Lower leg skin (tissue), 4 donors: ENCODE measurements at regions of chr12 and their contacts with region 1.

Region 1: DNA sequence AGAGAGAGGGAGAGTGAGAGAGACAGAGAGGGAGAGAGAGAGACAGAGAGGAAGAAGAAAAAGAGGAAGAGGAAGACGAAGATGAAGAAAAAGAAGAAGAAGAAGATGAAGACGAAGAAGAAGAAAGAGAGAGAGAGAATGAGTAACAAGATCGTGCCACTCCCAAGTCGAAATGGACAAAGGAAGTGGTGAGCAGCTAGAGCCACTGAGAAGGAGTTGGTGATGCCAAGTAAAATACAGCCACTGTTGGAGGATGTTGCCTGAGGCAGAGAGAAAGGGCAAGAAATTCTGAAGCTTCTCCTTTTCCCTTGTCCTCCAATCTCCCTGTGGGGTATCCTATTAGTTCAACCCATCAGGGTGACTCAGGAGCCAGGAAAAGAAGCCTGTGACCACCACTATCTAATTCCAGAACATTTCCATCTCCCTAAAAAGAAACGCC is 12.5 kb upstream of the ANAPC5 start:
- DNase-seq: no peak
- H3K4me3 ChIP-seq: no peak overlapping the region
- CTCF ChIP-seq: no peak
- POLR2A ChIP-seq: no peak

Region 2: DNA sequence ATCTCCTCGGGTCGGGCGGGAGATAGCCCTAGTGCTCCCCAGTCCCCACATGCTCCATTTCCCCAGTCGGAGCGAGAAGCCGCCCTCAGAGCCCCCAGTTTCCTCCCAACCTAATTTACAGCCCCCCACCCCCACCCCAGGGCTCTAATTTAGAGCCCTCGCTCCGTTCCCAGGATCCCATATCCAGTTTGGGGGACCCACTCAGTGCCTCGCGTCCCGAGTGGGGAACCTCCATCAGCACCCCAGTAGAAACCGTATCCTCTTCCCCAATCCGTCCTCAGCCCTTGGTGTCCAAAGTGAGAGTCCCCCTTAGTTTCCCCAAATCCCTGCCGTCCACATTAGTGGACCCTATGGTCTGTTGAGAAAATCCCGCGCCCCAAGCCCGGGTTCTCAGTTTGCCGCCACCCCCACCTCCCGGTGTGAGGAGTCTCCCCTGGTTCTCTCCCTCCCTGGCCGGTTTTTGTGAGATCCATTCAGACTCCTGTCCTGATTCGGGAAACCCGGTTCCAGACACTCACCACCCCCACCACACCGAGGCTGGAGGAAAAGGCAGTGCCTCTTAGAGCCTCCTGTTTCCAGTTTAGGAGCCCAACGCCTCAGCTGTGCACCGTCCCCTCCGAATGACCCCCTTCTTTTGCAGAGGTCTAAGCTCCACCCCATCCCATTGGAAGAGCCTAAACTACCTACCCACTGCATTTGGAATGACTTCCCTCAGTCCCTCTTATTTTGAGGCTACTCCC is 994.9 kb before region 1 on chr12:
- intact Hi-C with region 1: loop called (anchors 5 kb)
- DNase-seq: no peak
- H3K4me3 ChIP-seq: no peak overlapping the region
- CTCF ChIP-seq: no peak
- POLR2A ChIP-seq: no peak

Region 3: GRCh38 chr12:121391619-121392324 is 27.1 kb after region 1 on chr12:
- intact Hi-C with region 1: no loop called
- DNase-seq: peak in 1 of 2 donors; percentile 79
- H3K4me3 ChIP-seq: no peak overlapping the region
- CTCF ChIP-seq: no peak
- POLR2A ChIP-seq: no peak